ENCODE measurements at regions of chr6 and their contacts with region 1.

Region 1: DNA sequence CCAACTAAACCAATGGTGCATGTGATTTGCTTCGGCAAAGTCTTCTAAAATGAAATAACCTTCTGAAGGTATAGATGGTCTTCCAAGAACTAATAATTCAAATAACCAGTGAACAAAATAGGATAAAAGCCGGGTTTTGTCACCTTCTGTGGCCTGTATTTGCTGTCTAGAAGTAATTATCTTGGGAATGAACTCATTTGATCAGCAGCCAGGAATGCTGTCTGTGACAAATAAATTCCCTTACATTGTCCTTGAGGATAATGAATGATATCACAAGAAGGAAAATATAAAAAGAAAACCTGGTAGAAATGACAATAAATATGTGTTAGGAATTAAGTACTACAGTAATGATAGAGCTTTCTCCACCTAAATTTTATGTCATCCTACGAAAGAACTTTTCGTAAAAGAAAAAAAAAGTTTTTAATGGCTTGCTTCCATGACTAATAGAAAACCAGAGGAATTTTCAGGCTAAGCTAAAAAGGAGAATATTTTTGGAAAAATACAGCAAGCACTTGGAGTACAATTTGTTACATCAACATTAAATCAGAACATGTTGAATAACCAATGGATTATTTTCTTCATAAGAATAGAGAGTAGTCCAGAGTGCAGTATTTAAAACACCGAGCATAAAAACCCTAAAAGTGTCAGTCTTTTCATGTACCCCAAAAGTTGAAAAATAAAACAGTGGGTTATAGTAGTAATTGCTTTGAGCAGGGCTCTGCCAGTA is 247.7 kb downstream of the TBC1D7 start:
- DNase-seq: no peak
- H3K4me3 ChIP-seq: peak overlapping the region in 1 of 2 donors; percentile 33
- H3K27ac ChIP-seq: peak overlapping the region; percentile 69 to 73
- H3K4me1 ChIP-seq: peaks cover 22 to 51% of the 10 kb centered on the region in 2 donors
- H3K27me3 ChIP-seq: no peaks in the 10 kb centered on the region
- CTCF ChIP-seq: no peak

Region 2: DNA sequence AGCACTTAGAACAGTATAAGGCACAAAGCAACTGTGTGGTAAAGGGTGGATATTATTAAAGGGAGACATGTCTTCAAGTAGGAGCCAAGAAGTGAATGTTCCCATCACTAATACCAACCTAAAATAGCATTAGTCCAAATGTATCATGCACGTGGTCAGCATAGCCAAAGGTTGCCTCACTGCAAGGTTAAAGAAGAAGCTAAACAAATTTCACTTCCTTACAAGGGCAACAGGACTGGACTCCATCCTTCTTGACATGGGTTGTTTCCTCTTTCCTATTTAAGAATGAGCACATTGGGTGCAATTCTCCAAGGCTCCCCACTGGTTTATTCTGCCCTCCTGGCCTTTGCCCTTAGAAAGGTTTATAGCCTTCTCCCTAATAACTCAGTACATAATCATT is 177.4 kb before region 1 on chr6:
- intact Hi-C with region 1: no loop called
- DNase-seq: peak in 1 of 2 donors; percentile 66
- H3K4me3 ChIP-seq: no peak overlapping the region
- H3K27ac ChIP-seq: peak overlapping the region; percentile 22 to 56
- H3K4me1 ChIP-seq: peaks cover 0 to 6% of the 10 kb centered on the region in 2 donors
- H3K27me3 ChIP-seq: no peaks in the 10 kb centered on the region
- CTCF ChIP-seq: no peak

Region 3: DNA sequence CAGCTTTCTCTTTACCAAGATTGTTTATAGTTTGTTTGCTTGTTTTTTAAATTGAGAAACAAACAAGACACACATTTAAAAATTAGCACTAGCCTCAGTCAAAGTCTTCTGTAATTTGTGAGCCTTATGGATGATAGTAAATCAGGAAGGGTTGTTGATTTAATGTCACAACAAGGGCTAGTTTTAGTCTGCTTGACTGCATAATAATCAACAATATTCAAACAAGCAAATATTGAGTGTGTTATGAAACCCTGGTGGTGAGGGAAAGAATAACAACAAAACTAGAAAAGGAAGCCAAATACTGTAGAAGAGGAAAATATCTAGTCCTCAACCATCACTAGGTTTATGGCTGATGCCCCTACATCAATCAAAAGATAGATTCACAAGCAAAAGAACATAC is 19.1 kb after region 1 on chr6:
- intact Hi-C with region 1: loop called (anchors 2 kb)
- DNase-seq: no peak
- H3K4me3 ChIP-seq: no peak overlapping the region
- H3K27ac ChIP-seq: no peak overlapping the region
- H3K4me1 ChIP-seq: peaks cover 3 to 34% of the 10 kb centered on the region in 2 donors
- H3K27me3 ChIP-seq: no peaks in the 10 kb centered on the region
- CTCF ChIP-seq: no peak

Measured in ascending aorta (tissue), 2 donors.